ENCODE measurements at regions of chr17 and their contacts with region 1.

Region 1: DNA sequence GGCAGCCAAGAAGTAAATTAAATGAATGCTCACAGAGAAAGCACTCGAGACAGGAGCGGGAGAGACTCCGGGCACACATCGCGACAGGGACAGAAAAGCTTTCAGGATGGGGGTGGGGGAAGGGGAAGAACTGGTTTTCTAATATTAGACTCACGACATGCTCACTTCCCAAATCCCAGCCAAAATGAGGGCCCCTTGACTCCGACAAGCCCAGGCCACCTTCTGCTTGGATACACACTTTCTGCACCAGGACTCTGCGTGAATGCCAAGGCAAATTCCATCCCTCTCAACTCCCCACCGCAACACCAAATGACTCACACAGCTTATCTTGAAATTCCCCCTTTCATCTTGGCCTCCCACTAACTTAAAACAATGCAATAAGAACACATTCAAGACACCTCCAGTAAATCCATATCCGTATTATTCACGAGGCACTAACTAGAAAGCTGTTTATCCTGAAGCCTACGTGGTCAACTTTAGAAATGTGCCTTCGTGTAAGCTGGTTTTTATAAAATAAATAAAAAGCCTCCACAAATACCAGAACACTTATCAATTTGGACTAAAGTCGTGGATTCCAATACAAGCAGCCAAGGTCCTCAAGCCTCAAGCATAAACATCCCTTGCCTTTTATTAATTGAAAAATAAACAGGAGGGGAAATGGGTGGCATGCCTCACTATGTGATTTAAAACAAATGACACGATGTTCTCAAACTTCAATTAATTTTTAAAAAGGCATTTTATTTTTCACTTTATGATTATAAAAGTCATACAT is 46.1 kb downstream of the NXN start:
- H3K4me3 ChIP-seq: peak overlapping the region; percentile 0; the same call in 1 of the 2 replicates
- H3K27ac ChIP-seq: peak overlapping the region; percentile 35
- H3K4me1 ChIP-seq: peaks cover 11% of the 10 kb centered on the region
- CTCF ChIP-seq: no peak

Region 2: DNA sequence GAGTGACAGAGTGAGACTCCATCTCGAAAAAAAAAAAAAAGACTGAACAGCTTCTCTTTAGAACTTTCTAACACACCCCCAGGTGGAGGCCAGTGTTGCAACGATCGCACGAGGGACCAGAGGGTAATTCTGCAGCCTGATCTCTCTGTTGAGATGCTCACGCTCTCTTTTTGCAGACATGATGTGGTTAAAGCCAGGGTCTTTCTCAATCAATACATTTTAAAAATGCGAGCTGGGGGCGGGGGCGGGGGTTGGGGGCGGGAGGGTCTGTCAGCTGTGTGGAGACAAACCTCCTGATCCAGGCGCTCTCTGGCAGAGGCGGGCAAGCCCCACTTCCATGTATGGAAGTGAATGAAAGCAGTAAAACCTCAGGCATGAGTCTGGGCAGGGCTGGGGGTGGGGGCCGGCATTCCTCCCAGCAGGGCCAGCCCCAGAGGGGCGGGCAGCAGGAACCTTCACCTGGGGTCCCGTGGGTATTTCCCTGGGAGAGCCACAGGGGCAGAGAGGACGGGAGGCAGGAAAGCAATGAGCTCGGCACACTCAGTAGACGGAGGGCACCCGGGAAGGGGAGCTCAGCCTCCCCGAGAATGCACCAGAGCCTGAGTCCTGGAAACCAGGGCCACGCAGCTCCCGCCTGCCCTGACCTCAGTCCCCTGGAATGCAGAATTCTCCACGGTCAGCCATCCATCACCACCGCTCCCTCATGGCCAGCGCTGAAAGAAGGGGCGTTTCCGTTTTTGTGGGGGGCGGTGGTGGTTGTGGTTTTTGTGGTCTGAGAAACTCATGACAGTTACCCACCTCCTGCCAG is 18.0 kb after region 1 on chr17:
- CTCF ChIA-PET with region 1: interaction called, 6 read pairs
- POLR2A ChIA-PET with region 1: interaction called, 15 read pairs
- H3K4me3 ChIP-seq: peak overlapping the region; percentile 24
- H3K27ac ChIP-seq: 0 out of 2 replicates have a peak overlapping the region, but pooled peaks have one; percentile 11
- H3K4me1 ChIP-seq: peaks cover 14% of the 10 kb centered on the region
- CTCF ChIP-seq: no peak

Region 3: GRCh38 chr17:988561-988960 is 55.1 kb after region 1 on chr17:
- CTCF ChIA-PET with region 1: no interaction called
- POLR2A ChIA-PET with region 1: no interaction called
- H3K4me3 ChIP-seq: no peak overlapping the region
- H3K27ac ChIP-seq: no peak overlapping the region
- H3K4me1 ChIP-seq: no peaks in the 10 kb centered on the region
- CTCF ChIP-seq: no peak